Heart left ventricle (tissue), 16 donors: ENCODE measurements at regions of chr6 and their contacts with region 1.

Region 1: GRCh38 chr6:63598049-63599036 is 26.1 kb downstream of the LOC128125822 start:
- DNase-seq: peak; percentile 57 to 66 (median 59)
- ATAC-seq: peak; percentile 87 to 97 (median 92)
- H3K4me3 ChIP-seq: peak overlapping the region; percentile 33 to 63 (median 50)
- H3K27ac ChIP-seq: no peak overlapping the region
- H3K4me1 ChIP-seq: peaks cover 0 to 9% (median 0%) of the 10 kb centered on the region in 12 donors
- H3K27me3 ChIP-seq: peaks cover 0 to 3% (median 0%) of the 10 kb centered on the region in 9 donors
- CTCF ChIP-seq: peak; percentile 69 to 95 (median 82)
- POLR2A ChIP-seq: no peak

Region 2: DNA sequence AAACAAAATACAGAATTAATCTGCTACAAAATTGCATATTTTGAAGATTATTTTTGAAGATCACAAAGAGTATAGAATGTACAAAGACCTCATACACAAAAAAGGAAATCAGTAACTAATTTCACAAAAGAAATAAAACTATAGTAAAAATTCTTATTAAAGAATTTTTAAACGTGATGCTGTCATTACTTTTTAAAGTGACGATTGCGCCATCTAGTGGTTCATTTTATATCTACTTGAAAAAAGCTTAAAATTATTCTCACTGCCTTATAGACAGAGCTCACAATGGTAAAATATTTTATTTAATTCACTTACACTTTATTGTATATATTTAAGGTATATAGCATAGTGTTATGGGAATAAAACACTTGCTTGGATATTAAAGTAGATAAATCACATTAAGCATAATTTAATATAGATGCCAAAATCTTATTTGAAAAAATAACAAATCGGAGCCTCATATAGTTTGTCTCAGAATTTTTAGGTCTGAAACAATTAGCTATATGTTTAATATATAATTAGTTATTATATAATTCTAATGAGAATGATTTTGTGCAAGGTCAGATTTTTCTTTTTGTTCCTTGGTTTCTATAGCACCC is 166.1 kb after region 1 on chr6:
- intact Hi-C with region 1: loop called (anchors 1 to 5 kb)
- DNase-seq: no peak
- ATAC-seq: no peak
- H3K4me3 ChIP-seq: no peak overlapping the region
- H3K27ac ChIP-seq: no peak overlapping the region
- H3K4me1 ChIP-seq: no peaks in the 10 kb centered on the region
- H3K27me3 ChIP-seq: no peaks in the 10 kb centered on the region
- CTCF ChIP-seq: peak; percentile 53 to 86 (median 78)
- POLR2A ChIP-seq: no peak